Psoas muscle (tissue), 8 donors: ENCODE measurements at regions of chr4 and their contacts with region 1.

Region 1: GRCh38 chr4:86934771-86935565 is at the start of gene AFF1:
- DNase-seq: peak; percentile 94 to 98
- ATAC-seq: peak; percentile 88 to 95 (median 90)
- H3K4me3 ChIP-seq: peak within 1 kb of the TSS; percentile 86
- H3K27ac ChIP-seq: peak within 1 kb of the TSS; percentile 98
- H3K4me1 ChIP-seq: peaks cover 33% of the 10 kb centered on the region
- H3K27me3 ChIP-seq: no peaks in the 10 kb centered on the region
- CTCF ChIP-seq: peak; percentile 52
- total RNA-seq, gene AFF1: 118 to 149 (median 122) TPM

Region 2: GRCh38 chr4:87219632-87220093 is 284.7 kb after region 1 on chr4:
- intact Hi-C with region 1: loop called in 1 of 2 experiments (anchors 10 kb)
- DNase-seq: peak; percentile 53 to 57
- ATAC-seq: peak; percentile 33 to 54 (median 39)
- H3K4me3 ChIP-seq: peak overlapping the region; percentile 93
- H3K27ac ChIP-seq: peak overlapping the region; percentile 93
- H3K4me1 ChIP-seq: peaks cover 22% of the 10 kb centered on the region
- H3K27me3 ChIP-seq: no peaks in the 10 kb centered on the region
- CTCF ChIP-seq: peak; percentile 26